ENCODE measurements at regions of chr11 and their contacts with region 1.

Region 1: GRCh38 chr11:33772300-33772699 is 2.0 kb downstream of the FBXO3 start:
- DNase-seq: no peak
- H3K4me3 ChIP-seq: no peak overlapping the region
- H3K27ac ChIP-seq: no peak overlapping the region
- H3K27me3 ChIP-seq: no peaks in the 10 kb centered on the region
- CTCF ChIP-seq: no peak

Region 2: GRCh38 chr11:33257897-33258630 is 514.2 kb before region 1 on chr11:
- CTCF ChIA-PET with region 1: no interaction called
- POLR2A ChIA-PET with region 1: interaction called, 10 read pairs
- DNase-seq: peak; percentile 60
- H3K4me3 ChIP-seq: peak overlapping the region; percentile 90
- H3K27ac ChIP-seq: peak overlapping the region; percentile 95
- H3K27me3 ChIP-seq: no peaks in the 10 kb centered on the region
- CTCF ChIP-seq: peak; percentile 7; the same call in 1 of the 2 replicates

Region 3: GRCh38 chr11:33730716-33731115 is 41.6 kb before region 1 on chr11:
- CTCF ChIA-PET with region 1: no interaction called
- POLR2A ChIA-PET with region 1: no interaction called
- DNase-seq: no peak
- H3K4me3 ChIP-seq: no peak overlapping the region
- H3K27ac ChIP-seq: no peak overlapping the region
- H3K27me3 ChIP-seq: no peaks in the 10 kb centered on the region
- CTCF ChIP-seq: no peak

Region 4: GRCh38 chr11:33970984-33971466 is 198.7 kb after region 1 on chr11:
- CTCF ChIA-PET with region 1: no interaction called
- POLR2A ChIA-PET with region 1: no interaction called
- DNase-seq: peak; percentile 4
- H3K4me3 ChIP-seq: no peak overlapping the region
- H3K27ac ChIP-seq: no peak overlapping the region
- H3K27me3 ChIP-seq: peaks cover 15% of the 10 kb centered on the region
- CTCF ChIP-seq: peak; percentile 64

Measured in AG04450 (cell line).